Activated T-helper 2 cell treated with anti-CD3 and anti-CD28 coated beads, Interferon-gamma antibody, Interleukin-2, Interleukin-4, amounts not matched to agents 10 μg/mL and 5 μg/mL and 100 μg/mL, durations not matched to agents 14 hours and 24 hours and 36 hours (primary cell): ENCODE measurements at regions of chr17 and their contacts with region 1.

Region 1: GRCh38 chr17:40480501-40481003 is 20.9 kb downstream of the TNS4 start:
- DNase-seq: peak; percentile 82
- H3K4me3 Mint-ChIP-seq: peak overlapping the region; percentile 73
- H3K27ac Mint-ChIP-seq: peak overlapping the region; percentile 96
- H3K4me1 Mint-ChIP-seq: peaks cover 70% of the 10 kb centered on the region
- H3K27me3 Mint-ChIP-seq: no peaks in the 10 kb centered on the region

Region 2: DNA sequence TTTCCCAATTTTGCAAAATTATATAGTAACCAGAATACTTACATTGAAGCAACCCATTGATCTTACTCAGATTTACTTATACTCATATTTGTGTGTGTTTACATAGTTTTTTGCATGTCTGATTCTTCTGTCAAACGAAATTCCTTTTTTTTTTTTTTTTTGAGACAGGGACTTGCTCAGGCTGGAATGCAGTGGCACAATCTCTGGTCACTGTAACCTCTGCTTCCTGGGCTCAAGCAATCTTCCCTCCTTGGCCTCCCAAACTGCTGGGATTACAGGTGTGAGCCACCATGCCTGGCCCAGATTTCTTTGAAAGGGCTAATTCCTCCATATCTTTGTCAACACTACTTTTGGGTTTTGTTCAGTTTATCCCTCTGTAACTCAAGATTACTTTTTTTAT is 92.9 kb before region 1 on chr17:
- intact Hi-C with region 1: no loop called
- DNase-seq: no peak
- H3K4me3 Mint-ChIP-seq: no peak overlapping the region
- H3K27ac Mint-ChIP-seq: no peak overlapping the region
- H3K4me1 Mint-ChIP-seq: peaks cover 1% of the 10 kb centered on the region
- H3K27me3 Mint-ChIP-seq: no peaks in the 10 kb centered on the region

Region 3: DNA sequence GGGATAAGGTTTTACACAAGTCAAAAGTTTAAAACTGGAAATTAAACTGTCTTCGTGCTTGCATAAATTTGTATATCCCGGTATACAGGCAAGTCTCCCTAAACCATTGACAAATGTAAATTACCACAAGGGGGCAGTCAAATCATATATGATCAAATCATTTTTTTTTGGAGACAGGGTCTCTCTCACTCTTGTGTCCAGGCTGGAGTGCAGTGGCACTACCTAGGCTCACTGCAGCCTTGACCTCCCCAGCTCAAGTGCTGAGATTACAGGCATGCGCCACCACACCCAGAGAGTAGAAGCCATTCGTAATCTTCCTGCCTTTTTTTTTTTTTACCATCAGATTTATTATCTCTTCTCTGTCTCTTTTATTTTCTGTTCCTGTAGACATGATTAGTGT is 81.4 kb before region 1 on chr17:
- intact Hi-C with region 1: loop called (anchors 2 kb)
- DNase-seq: no peak
- H3K4me3 Mint-ChIP-seq: no peak overlapping the region
- H3K27ac Mint-ChIP-seq: peak overlapping the region; percentile 60
- H3K4me1 Mint-ChIP-seq: peaks cover 26% of the 10 kb centered on the region
- H3K27me3 Mint-ChIP-seq: no peaks in the 10 kb centered on the region

Region 4: GRCh38 chr17:40443583-40444327 is 36.8 kb before region 1 on chr17:
- intact Hi-C with region 1: loop called (anchors 5 kb)
- DNase-seq: peak; percentile 66
- H3K4me3 Mint-ChIP-seq: peak overlapping the region; percentile 84
- H3K27ac Mint-ChIP-seq: peak overlapping the region; percentile 89
- H3K4me1 Mint-ChIP-seq: peaks cover 39% of the 10 kb centered on the region
- H3K27me3 Mint-ChIP-seq: no peaks in the 10 kb centered on the region

Region 5: GRCh38 chr17:40516581-40517285 is 36.2 kb after region 1 on chr17:
- intact Hi-C with region 1: loop called (anchors 1 kb)
- DNase-seq: peak; percentile 77
- H3K4me3 Mint-ChIP-seq: peak overlapping the region; percentile 74
- H3K27ac Mint-ChIP-seq: peak overlapping the region; percentile 88
- H3K4me1 Mint-ChIP-seq: peaks cover 61% of the 10 kb centered on the region
- H3K27me3 Mint-ChIP-seq: no peaks in the 10 kb centered on the region